Dendritic cell treated with granulocyte-macrophage colony-stimulating factor and Interleukin-4, amounts not matched to agents 40 ng/mL and 50 ng/mL, for 4 days (primary cell): ENCODE measurements at regions of chr11 and their contacts with region 1.

Region 1: DNA sequence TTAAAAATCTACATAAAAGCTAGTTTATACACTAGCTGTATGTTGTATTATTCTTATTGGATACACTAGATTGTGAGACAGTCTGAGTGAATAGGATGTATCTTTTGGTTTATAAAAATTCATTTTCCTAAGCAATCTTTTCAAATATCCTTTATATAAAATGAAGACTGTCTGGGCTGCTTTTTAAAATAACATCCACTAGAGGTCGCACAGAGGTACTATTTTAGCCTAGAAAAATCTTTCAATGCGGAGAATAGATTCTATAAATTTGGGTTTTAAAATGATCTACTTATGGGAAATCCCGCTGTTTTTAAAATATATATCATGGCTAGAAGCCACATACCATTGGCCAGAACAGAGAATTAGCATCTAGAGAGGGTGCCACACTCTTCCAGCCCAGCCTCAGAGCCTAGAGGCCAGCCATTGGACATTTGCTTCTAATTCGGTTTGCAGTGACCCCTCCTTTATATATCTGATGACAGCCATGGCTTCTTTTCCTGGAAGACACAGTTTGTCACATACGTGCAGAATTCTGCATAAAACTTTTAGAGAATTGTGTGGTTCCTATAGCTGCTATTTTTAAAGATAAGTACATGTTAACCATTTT is 7.3 kb downstream of the C11orf97 start:
- H3K4me3 Mint-ChIP-seq: no peak overlapping the region
- H3K27ac Mint-ChIP-seq: no peak overlapping the region
- H3K4me1 Mint-ChIP-seq: no peaks in the 10 kb centered on the region
- H3K27me3 Mint-ChIP-seq: no peaks in the 10 kb centered on the region

Region 2: DNA sequence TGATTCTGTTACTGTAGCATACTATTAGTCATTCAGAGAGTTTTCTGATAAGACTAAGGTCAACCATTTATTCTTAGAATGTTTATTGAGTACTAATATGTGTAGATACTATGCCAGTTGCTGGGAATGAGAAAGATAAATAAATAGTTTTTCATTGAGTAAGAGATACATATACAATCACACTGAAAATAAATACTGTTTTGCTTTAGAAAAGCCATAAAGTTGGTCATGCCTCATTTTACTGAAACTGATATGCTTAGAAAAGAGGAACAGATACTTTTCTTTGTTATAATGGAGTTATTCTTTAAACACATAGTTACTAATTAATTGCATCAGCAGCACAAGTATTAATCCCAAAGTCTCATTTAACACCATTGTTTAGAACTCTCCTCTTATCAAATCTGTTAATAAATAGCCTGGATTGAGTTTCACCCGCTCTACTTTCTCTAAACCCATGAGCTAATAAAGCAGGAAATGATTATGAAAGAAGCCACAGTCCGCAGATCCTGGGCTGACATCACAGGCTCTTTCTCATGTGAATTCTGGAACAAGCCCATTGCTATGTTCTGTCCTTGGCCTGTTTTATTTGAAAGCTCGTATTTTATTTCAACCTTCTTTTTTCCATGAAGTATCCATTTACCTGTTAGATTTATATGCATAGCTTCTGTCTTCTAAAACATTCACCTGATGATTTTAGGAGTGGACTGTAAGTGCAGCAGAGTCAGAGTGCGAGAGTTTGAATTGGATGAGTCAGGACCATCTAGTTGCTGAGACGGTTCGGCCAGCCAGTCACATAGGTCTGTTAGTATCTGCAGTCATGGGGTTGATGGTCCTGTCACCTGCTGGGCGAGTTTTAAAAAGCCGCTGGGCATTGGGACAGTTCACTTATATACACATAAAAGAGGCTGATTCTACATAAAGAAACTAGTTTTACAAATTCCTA is 83.1 kb after region 1 on chr11:
- intact Hi-C with region 1: loop called (anchors 1 kb)
- H3K4me3 Mint-ChIP-seq: peak overlapping the region; percentile 9
- H3K27ac Mint-ChIP-seq: peak overlapping the region; percentile 75
- H3K4me1 Mint-ChIP-seq: peaks cover 19% of the 10 kb centered on the region
- H3K27me3 Mint-ChIP-seq: no peaks in the 10 kb centered on the region

Region 3: DNA sequence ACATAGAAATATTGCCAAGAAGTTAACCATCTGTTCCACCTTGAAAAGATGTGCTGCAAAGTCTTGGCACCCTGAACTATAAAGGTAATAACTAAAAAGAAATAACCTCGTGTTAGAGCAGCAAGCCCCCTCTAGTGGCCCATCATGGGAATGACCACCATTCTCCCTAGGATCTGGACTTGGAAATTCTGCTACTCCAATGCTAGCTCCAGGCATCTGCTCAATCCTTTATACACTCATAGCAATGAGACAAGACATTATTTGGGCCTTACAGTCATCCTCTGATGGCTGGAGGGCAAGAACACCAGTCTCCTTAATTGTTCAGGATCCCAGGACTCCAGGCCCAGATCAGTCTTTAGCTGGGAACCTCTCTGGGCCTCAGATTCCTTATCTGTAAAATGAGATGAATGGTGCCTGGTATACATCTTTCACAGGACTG is 377.8 kb after region 1 on chr11:
- intact Hi-C with region 1: loop called (anchors 10 kb)
- H3K4me3 Mint-ChIP-seq: no peak overlapping the region
- H3K27ac Mint-ChIP-seq: no peak overlapping the region
- H3K4me1 Mint-ChIP-seq: peaks cover 6% of the 10 kb centered on the region
- H3K27me3 Mint-ChIP-seq: no peaks in the 10 kb centered on the region